Heart left ventricle (tissue), 16 donors: ENCODE measurements at regions of chr1 and their contacts with region 1.

Region 1: GRCh38 chr1:219385786-219386427 is 212.2 kb downstream of the LYPLAL1 start:
- DNase-seq: peak in 4 of 5 donors; percentile 22 to 36 (median 33)
- ATAC-seq: peak; percentile 58 to 79 (median 70)
- H3K4me3 ChIP-seq: no peak overlapping the region
- H3K27ac ChIP-seq: no peak overlapping the region
- H3K4me1 ChIP-seq: peaks cover 0 to 3% (median 0%) of the 10 kb centered on the region in 12 donors
- H3K27me3 ChIP-seq: no peaks in the 10 kb centered on the region
- CTCF ChIP-seq: peak; percentile 34 to 74 (median 62)
- POLR2A ChIP-seq: no peak

Region 2: DNA sequence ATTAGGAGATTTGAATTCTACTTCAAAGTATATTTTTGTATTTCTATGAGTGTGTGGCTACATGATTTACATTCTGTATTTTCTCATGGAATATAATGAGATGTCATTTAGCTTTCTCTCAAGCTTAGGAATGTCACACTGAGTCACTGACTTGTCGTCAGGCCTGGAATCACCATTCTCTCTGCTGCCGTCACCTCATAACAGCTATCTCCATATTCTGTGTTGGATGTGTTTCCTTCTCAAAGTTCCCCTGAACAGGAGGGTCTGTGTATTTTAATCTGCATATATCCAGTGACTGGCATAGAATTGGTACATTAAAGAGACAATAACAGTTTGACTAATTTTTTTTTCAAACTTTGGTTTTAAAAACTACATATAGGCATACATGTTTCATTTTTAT is 176.3 kb before region 1 on chr1:
- intact Hi-C with region 1: loop called in 1 of 10 experiments (anchors 10 kb)
- DNase-seq: no peak
- ATAC-seq: peak in 3 of 4 donors; percentile 68 to 81 (median 80)
- H3K4me3 ChIP-seq: no peak overlapping the region
- H3K27ac ChIP-seq: peak overlapping the region in 1 of 12 donors; percentile 25
- H3K4me1 ChIP-seq: peaks cover 0 to under 1% (median 0%) of the 10 kb centered on the region in 12 donors
- H3K27me3 ChIP-seq: no peaks in the 10 kb centered on the region
- CTCF ChIP-seq: no peak
- POLR2A ChIP-seq: no peak

Region 3: DNA sequence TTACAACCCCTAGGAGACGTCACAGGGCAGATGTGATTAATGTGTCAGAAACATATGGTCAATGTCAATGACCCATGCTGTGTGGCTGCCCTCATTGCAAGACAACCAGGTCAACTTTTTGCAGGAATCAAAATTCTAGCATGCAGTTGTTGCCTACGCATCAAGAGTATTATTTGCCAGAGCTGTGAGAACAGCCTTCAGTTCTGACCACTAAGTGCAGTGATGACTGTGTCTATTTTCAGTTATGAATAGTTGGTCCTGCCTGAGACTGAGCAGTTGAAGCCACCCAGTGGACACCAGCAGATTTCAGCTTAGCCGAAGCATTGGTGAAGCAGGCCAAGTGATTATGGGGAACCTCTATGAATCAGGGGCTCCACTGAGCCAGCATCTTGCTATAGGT is 165.0 kb before region 1 on chr1:
- intact Hi-C with region 1: loop called in 1 of 10 experiments (anchors 10 kb)
- DNase-seq: peak in 2 of 5 donors; percentile 17 to 20
- ATAC-seq: peak; percentile 67 to 90 (median 88)
- H3K4me3 ChIP-seq: no peak overlapping the region
- H3K27ac ChIP-seq: no peak overlapping the region
- H3K4me1 ChIP-seq: peaks cover 0 to 9% (median 0%) of the 10 kb centered on the region in 12 donors
- H3K27me3 ChIP-seq: no peaks in the 10 kb centered on the region
- CTCF ChIP-seq: peak in 4 of 12 donors; percentile 11 to 41 (median 32)
- POLR2A ChIP-seq: no peak

Region 4: DNA sequence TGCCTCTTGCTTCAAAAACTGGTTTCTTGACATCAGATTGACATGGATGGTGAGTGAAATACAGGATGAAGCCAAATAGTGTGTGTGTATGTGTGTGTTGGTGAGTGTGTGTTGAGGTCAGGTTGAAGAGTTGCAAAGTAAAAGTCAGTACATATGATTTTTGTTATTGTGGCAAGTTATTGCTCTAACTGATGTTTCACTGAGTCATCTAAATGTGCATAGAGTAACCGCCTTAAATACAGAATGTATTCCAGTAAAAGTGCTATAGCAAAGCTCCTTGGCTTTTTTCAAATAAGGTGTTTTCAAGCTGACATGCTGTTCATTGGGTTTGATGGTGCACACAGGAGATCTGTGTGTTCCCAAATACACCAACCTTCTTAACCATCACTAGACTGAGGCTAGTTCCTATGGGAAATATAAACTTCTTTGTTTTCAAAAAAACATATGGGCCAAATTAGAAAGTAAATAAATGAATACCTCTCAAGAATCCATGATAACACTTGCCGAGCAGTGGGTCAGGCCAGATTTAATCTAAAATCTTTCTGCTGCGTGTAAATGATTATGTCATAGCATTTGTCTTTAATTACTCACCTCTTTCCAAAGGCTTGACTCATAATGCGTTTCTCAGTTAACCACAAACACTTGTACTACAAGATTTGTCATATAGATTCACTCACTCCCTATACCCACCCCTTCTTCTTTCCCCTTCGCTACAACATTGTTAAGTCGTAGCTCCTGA is 61.1 kb before region 1 on chr1:
- intact Hi-C with region 1: loop called in 1 of 10 experiments (anchors 10 kb)
- DNase-seq: no peak
- ATAC-seq: no peak
- H3K4me3 ChIP-seq: no peak overlapping the region
- H3K27ac ChIP-seq: no peak overlapping the region
- H3K4me1 ChIP-seq: peaks cover 0 to 9% (median 0%) of the 10 kb centered on the region in 12 donors
- H3K27me3 ChIP-seq: no peaks in the 10 kb centered on the region
- CTCF ChIP-seq: no peak
- POLR2A ChIP-seq: no peak

Region 5: GRCh38 chr1:219544163-219544846 is 158.4 kb after region 1 on chr1:
- intact Hi-C with region 1: no loop called
- DNase-seq: no peak
- ATAC-seq: no peak
- H3K4me3 ChIP-seq: no peak overlapping the region
- H3K27ac ChIP-seq: no peak overlapping the region
- H3K4me1 ChIP-seq: no peaks in the 10 kb centered on the region
- H3K27me3 ChIP-seq: no peaks in the 10 kb centered on the region
- CTCF ChIP-seq: peak in 7 of 12 donors; percentile 6 to 40 (median 27)
- POLR2A ChIP-seq: no peak